GM18951 (cell line): ENCODE measurements at regions of chr17 and their contacts with region 1.

Region 1: GRCh38 chr17:17675925-17676534 is 5.2 kb upstream of the RAI1 start:
- POLR2A ChIP-seq: no peak

Region 2: DNA sequence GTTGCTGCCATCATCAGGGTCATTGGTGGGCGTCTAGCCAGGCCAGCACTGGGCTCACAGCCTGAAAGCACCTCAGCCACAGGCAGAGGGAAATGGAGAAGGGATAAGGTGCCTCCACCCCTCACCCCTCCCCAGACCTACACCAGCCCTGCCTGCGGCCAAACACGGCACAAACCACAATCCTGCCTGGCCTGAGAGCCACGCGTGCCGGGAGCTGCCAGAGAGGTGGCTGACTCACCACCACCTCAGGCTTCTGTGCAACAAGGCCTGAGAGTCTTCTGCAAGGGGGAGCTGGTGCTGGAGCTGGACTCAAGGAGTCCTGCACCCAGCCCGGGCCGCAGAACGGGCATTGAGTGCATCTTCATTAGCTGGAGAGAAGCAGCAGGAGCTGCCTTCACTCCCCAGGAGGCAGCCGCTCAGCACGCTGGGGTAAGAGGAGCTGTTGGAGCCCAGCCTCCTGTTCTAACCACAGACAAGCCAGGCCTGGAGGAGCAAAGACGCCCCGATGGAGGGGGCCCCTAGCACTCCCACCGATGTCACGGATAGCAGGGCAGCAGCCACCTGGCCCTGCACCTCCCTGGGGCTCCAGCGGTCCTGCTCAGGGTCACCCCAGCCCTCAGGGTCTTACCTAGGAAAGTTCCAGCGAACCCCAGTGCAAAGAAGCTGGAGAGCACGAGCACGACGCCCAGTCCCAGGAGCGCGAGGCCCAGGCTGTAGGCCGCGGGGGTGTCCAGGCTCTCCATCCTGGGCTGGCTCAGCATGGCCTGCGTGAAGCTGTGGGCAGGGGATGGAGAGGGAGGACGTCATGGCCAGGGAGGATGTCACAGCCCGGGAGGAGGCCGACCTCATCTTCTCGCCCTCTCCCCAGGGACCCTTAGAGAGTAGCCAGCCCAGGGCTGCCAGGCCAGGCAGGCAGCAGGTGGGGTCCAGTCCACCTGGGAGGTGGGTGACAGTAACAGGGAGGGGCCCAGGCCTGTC is 163.9 kb before region 1 on chr17:
- in situ Hi-C with region 1: no loop called
- POLR2A ChIP-seq: no peak

Region 3: GRCh38 chr17:17859909-17860765 is 184.1 kb after region 1 on chr17:
- in situ Hi-C with region 1: loop called (anchors 10 kb)
- POLR2A ChIP-seq: no peak